Motor neuron (in vitro differentiated cells): ENCODE measurements at regions of chr2 and their contacts with region 1.

Region 1: GRCh38 chr2:165193178-165193777 is 10.6 kb downstream of the SCN3A start:
- ATAC-seq: peak in 3 of 8 experiments; percentile 34 to 97 (median 68)
- H3K4me3 ChIP-seq: no peak overlapping the region
- H3K27ac ChIP-seq: no peak overlapping the region
- H3K4me1 ChIP-seq: peaks cover 5 to 31% of the 10 kb centered on the region in 2 donors

Region 2: GRCh38 chr2:165015052-165015642 is 178.1 kb before region 1 on chr2:
- in situ Hi-C with region 1: loop called in 2 of 9 experiments (anchors 25 kb)
- ATAC-seq: peak in 7 of 8 experiments; percentile 35 to 79 (median 49)
- H3K4me3 ChIP-seq: no peak overlapping the region
- H3K27ac ChIP-seq: no peak overlapping the region
- H3K4me1 ChIP-seq: peaks cover 10 to 23% of the 10 kb centered on the region in 2 donors